ENCODE measurements at regions of chr12 and their contacts with region 1.

Region 1: DNA sequence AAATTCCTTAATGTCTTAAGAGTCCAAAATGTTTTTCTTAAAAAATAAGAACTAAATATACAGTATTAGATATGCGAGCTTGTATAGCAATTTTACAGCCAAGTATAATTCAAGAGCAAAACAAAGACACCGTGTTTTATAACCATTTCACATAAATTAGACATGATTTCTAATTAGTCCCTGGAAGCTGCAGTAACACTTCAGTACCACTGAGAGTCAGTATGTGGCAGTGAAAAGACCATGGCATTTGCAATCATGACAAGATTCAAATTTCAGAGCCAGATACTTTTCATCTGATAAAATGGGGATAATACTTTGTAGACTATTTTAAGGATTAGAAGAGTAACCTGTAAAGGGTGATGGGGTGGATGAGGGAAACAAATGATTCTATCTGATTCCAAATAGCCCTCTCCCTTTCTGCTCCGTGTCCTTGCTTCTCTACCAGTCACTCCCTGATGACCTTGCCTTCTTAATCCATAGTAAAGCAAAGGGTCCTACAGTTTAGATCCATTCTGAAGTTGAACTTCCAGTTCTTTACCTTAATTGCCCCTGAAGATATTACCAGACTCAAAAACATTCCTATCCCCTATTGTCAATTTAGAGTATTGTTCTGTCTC is 145.4 kb upstream of the ABCD2 start:
- DNase-seq: no peak
- ATAC-seq: peak; percentile 75 to 90 (median 89)
- H3K4me3 ChIP-seq: no peak overlapping the region
- H3K27ac ChIP-seq: no peak overlapping the region
- H3K4me1 ChIP-seq: no peaks in the 10 kb centered on the region
- H3K27me3 ChIP-seq: no peaks in the 10 kb centered on the region
- CTCF ChIP-seq: peak in 3 of 4 donors; percentile 55 to 72 (median 57)

Region 2: DNA sequence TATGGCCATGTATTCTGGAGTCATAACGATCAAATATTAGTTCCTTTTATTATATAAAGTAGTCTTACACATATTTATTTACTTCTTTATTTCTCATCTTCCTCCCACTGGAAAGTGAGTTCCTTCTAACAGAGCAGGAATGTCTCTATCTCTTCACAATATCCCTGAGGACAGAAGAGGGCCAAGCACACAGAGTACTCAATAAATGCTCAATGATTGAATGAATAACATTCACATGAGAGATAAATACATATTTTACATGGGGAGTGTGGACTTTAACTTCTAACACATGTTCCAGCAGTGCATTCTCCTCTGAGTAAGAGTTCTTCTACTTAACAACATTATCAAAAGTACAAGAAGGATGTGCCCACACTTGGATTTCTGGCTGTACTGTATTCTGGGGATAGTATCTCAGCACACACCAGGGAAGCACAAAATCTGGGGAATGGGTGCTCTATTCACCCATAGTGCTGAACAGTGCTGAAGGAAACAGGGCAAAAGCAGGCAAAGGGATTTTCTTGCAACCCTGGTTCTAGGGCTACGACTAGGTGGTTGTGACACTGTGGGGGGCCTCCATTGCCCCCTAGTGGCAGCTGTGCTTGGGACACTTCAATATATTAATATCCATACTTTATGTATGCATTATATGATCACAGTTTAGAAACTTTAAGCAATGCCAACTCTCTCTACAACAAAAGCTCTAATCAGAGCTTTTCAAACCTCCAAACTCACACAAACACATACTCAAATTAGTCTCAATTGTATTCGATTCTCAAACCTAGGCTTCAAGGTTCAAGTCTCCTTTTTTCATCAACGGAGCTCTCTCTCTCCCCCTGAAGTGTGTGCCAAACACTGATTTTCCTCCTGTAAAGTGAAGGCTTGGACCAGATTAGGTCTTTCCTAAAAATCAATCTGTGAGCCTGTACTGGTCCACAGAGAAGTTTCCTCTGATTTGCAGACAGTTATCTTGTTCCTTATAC is 225.4 kb after region 1 on chr12:
- intact Hi-C with region 1: loop called in 2 of 3 experiments (anchors 10 kb)
- DNase-seq: peak; percentile 18 to 79 (median 43)
- ATAC-seq: peak; percentile 66 to 96 (median 92)
- H3K4me3 ChIP-seq: no peak overlapping the region
- H3K27ac ChIP-seq: no peak overlapping the region
- H3K4me1 ChIP-seq: no peaks in the 10 kb centered on the region
- H3K27me3 ChIP-seq: no peaks in the 10 kb centered on the region
- CTCF ChIP-seq: peak; percentile 59 to 82 (median 73)

Region 3: GRCh38 chr12:40117818-40118217 is 352.8 kb after region 1 on chr12:
- intact Hi-C with region 1: loop called in 1 of 3 experiments (anchors 10 kb)
- DNase-seq: no peak
- ATAC-seq: no peak
- H3K4me3 ChIP-seq: no peak overlapping the region
- H3K27ac ChIP-seq: no peak overlapping the region
- H3K4me1 ChIP-seq: no peaks in the 10 kb centered on the region
- H3K27me3 ChIP-seq: no peaks in the 10 kb centered on the region
- CTCF ChIP-seq: no peak

Measured in pancreas (tissue), 10 donors.